ENCODE measurements at regions of chr10 and their contacts with region 1.

Region 1: GRCh38 chr10:71957546-71958275 is 6.5 kb upstream of the CHST3 start:
- DNase-seq: no peak
- ATAC-seq: no peak
- H3K4me3 ChIP-seq: no peak overlapping the region
- H3K27ac ChIP-seq: no peak overlapping the region
- H3K4me1 ChIP-seq: peaks cover 0 to 12% (median 7%) of the 10 kb centered on the region in 12 donors
- H3K27me3 ChIP-seq: no peaks in the 10 kb centered on the region
- CTCF ChIP-seq: no peak
- POLR2A ChIP-seq: no peak

Region 2: DNA sequence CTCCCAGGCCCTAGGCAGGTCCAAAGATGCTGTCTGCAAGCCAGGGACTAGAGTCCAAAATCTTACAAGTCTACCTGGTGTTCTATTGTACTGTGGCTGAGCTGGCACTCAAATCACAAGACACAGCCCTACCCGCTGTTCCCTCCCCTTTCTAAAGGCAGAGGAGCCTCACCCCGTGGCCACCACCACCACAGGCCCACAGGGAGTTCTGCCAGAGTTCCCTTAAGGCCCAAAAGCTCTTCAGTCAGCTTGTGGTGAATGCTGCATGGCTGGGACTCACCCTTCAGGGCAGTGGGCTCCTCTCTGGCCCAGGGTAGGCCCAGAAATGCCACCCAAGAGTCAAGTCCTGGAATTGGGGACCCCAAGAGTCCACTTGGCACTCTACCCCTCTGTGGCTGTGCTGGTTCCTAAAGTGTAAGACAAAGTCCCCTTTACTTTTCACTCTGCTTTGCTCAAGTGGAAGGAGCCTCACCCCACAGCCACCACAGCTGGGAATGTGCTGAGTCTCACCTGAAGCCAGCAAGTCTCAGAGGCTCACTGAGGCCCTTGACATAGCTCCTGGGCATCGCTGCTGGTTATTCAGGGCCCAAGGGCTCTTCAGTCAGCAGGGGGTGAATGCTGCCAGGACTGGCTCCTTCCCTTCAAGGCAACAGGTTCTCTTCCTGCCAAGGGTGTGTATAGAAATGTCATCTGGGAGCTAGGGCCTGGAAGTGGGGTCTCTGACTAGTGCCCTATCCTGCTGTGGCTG is 57.9 kb before region 1 on chr10:
- intact Hi-C with region 1: loop called in 3 of 10 experiments (anchors 5 kb)
- DNase-seq: peak in 1 of 5 donors; percentile 9
- ATAC-seq: no peak
- H3K4me3 ChIP-seq: no peak overlapping the region
- H3K27ac ChIP-seq: no peak overlapping the region
- H3K4me1 ChIP-seq: peaks cover 0 to 16% (median 0%) of the 10 kb centered on the region in 12 donors
- H3K27me3 ChIP-seq: no peaks in the 10 kb centered on the region
- CTCF ChIP-seq: no peak
- POLR2A ChIP-seq: no peak

Region 3: GRCh38 chr10:72009411-72010081 is 51.8 kb after region 1 on chr10:
- intact Hi-C with region 1: no loop called
- DNase-seq: peak; percentile 85 to 93 (median 87)
- ATAC-seq: peak; percentile 62 to 88 (median 76)
- H3K4me3 ChIP-seq: no peak overlapping the region
- H3K27ac ChIP-seq: peak overlapping the region; percentile 71 to 97 (median 87)
- H3K4me1 ChIP-seq: peaks cover 7 to 74% (median 51%) of the 10 kb centered on the region in 12 donors
- H3K27me3 ChIP-seq: no peaks in the 10 kb centered on the region
- CTCF ChIP-seq: no peak
- POLR2A ChIP-seq: peak in 1 of 2 donors; percentile 19

Region 4: GRCh38 chr10:72038458-72039001 is 80.8 kb after region 1 on chr10:
- intact Hi-C with region 1: loop called in 1 of 10 experiments (anchors 2 kb)
- DNase-seq: no peak
- ATAC-seq: peak in 2 of 4 donors; percentile 20 to 40
- H3K4me3 ChIP-seq: no peak overlapping the region
- H3K27ac ChIP-seq: peak overlapping the region in 3 of 12 donors; percentile 9 to 14 (median 13)
- H3K4me1 ChIP-seq: peaks cover 0 to 35% (median 10%) of the 10 kb centered on the region in 12 donors
- H3K27me3 ChIP-seq: no peaks in the 10 kb centered on the region
- CTCF ChIP-seq: no peak
- POLR2A ChIP-seq: no peak

Region 5: GRCh38 chr10:72223743-72224101 is 266.0 kb after region 1 on chr10:
- intact Hi-C with region 1: loop called in 4 of 10 experiments (anchors 5 to 10 kb)
- DNase-seq: no peak
- ATAC-seq: peak; percentile 13 to 61 (median 32)
- H3K4me3 ChIP-seq: no peak overlapping the region
- H3K27ac ChIP-seq: peak overlapping the region in 11 of 12 donors; percentile 14 to 78 (median 58)
- H3K4me1 ChIP-seq: peaks cover 0 to 57% (median 21%) of the 10 kb centered on the region in 12 donors
- H3K27me3 ChIP-seq: no peaks in the 10 kb centered on the region
- CTCF ChIP-seq: no peak
- POLR2A ChIP-seq: no peak

Region 6: DNA sequence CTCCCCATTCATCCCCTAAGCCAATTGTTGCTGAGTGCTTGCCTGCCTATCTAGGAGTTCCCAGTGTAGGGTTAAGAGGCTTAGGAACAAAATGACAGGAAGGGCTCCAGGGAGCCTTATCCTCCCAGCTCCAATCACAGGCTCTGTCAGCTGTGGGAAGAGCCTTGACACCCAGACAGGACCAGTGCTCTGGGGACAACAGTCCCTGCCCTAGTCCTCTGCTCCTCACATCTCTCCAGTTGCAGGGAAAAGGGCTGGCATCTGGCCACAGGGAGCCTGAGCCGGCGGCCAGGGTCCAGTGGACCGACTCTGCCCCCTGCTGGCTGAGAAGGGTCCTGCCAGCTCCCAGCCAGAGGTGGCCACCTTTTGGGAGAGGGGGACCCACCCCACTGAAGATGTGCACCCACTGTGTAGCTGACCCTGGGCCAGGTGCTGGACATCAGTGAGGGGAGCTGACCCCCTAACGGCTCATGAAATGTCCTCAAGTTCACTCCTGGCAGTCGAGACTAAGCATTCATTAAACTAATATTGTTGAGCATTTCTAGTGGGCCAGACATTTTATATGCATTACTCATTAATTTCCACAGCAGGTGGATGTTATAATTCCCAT is 379.4 kb after region 1 on chr10:
- intact Hi-C with region 1: loop called in 6 of 10 experiments (anchors 2 to 5 kb)
- DNase-seq: peak; percentile 87 to 94 (median 92)
- ATAC-seq: peak; percentile 16 to 44 (median 39)
- H3K4me3 ChIP-seq: no peak overlapping the region
- H3K27ac ChIP-seq: peak overlapping the region; percentile 82 to 98 (median 92)
- H3K4me1 ChIP-seq: peaks cover 8 to 63% (median 53%) of the 10 kb centered on the region in 12 donors
- H3K27me3 ChIP-seq: no peaks in the 10 kb centered on the region
- CTCF ChIP-seq: peak; percentile 93 to 99 (median 98)
- POLR2A ChIP-seq: no peak

Measured in heart left ventricle (tissue), 16 donors.